GM13977 (cell line): ENCODE measurements at regions of chr3 and their contacts with region 1.

Region 1: GRCh38 chr3:115692887-115693524 is 69.7 kb downstream of the GAP43 start:
- DNase-seq: peak; percentile 62
- CTCF ChIP-seq: peak; percentile 79

Region 2: GRCh38 chr3:115092220-115092791 is 600.7 kb before region 1 on chr3:
- in situ Hi-C with region 1: loop called (anchors 25 kb)
- DNase-seq: peak; percentile 23
- CTCF ChIP-seq: peak; percentile 72

Region 3: GRCh38 chr3:115226844-115227445 is 466.1 kb before region 1 on chr3:
- in situ Hi-C with region 1: loop called (anchors 10 kb)
- DNase-seq: no peak
- CTCF ChIP-seq: no peak